OCI-LY7 (cell line): ENCODE measurements at regions of chr11 and their contacts with region 1.

Region 1: DNA sequence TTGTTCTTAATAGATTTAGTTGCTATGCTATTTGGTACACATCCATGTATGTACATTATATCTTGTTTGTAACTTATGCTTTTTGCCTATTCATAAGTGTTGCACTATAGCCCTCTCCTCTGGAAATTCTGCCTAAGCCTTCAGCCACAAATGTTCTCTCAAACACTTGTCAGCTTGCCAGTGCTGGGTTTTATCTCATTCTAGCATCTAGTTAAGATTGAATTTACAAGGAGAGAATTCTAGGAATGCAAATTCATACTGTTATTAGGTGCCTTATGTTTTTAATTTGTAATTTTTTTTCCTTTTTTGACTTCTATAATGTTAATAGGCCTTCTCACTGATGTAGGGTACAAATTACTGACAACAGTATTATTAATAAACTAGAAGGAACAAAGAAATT is 14.6 kb upstream of the CTSC start:
- DNase-seq: no peak
- H3K4me3 ChIP-seq: no peak overlapping the region
- H3K27ac ChIP-seq: no peak overlapping the region
- H3K4me1 ChIP-seq: no peaks in the 10 kb centered on the region
- CTCF ChIP-seq: no peak

Region 2: DNA sequence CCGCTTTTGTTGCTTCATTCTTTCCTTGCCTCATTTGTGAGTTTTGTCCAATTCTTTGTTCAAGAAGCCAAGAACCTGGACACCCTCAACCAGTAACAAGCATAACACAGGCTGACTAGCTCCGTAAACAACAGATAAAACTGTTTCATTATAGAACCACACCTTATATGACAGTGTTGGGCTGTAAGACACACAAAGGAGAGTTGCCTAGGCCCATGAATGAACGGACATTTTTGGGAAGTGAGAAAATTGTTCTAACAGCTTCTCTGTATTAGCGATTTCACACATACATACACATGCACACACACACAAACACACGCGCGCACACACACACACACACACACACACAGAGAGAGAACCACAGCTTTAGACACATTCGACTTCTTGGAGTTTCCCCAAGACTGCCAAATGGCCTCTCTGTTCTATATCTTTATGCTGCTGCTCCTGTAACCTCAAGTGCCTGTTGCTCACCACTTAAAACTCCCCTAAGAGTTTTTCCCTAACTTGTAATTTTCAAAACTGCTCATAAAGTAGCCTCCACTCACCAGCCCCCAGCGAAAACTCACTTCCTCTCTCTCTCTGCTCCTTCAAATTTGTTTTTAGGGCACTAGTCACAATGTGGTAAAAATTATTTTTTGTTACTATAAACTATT is 50.5 kb before region 1 on chr11:
- CTCF ChIA-PET with region 1: no interaction called
- POLR2A ChIA-PET with region 1: no interaction called
- intact Hi-C with region 1: no loop called
- DNase-seq: no peak
- H3K4me3 ChIP-seq: no peak overlapping the region
- H3K27ac ChIP-seq: no peak overlapping the region
- H3K4me1 ChIP-seq: no peaks in the 10 kb centered on the region
- CTCF ChIP-seq: no peak

Region 3: DNA sequence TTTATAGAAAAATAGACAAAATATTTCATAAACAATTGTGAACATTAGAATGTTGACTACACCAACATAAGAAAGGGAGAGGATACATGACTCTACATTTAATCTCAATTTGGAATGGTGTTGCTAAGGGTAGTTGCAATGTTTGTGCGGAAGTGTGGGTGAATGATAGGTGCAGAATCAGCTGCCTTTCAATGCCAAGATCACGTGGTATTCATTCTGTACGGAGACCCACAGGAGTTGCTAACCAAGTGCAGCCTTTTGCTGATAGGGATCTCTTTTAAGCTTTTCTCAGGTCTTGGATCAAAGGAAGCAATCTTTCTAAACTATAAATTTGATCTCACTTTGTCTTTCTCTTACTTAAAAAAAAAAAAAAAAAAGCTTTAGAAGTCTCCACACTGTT is 15.2 kb after region 1 on chr11:
- CTCF ChIA-PET with region 1: no interaction called
- POLR2A ChIA-PET with region 1: interaction called, 13 read pairs
- intact Hi-C with region 1: no loop called
- DNase-seq: no peak
- H3K4me3 ChIP-seq: no peak overlapping the region
- H3K27ac ChIP-seq: no peak overlapping the region
- H3K4me1 ChIP-seq: no peaks in the 10 kb centered on the region
- CTCF ChIP-seq: no peak